K562 (cell line): ENCODE measurements at regions of chr1 and their contacts with region 1.

Region 1: GRCh38 chr1:11262171-11263049 is at the start of gene MTOR:
- DNase-seq: peak; percentile 100
- ATAC-seq: peak; percentile 99
- H3K4me3 ChIP-seq: peak within 1 kb of the TSS; percentile 96
- H3K27ac ChIP-seq: peak within 1 kb of the TSS; percentile 81
- H3K4me1 ChIP-seq: peaks cover 0 to 20% of the 10 kb centered on the region in 2 experiments; a peak in 4 of 5 replicates
- H3K27me3 ChIP-seq: no peaks in the 10 kb centered on the region; a peak in 1 of 5 replicates
- CTCF ChIP-seq: peak; percentile 45 to 59 (median 48)
- EP300 ChIP-seq: peak; percentile 66
- POLR2A ChIP-seq: peak; percentile 89
- RAD21 ChIP-seq: 0 out of 4 replicates have a peak, but pooled peaks of 1 of the 2 experiments have one; percentile 10
- polyA plus RNA-seq, gene MTOR: 11.4 to 16.3 TPM

Region 2: DNA sequence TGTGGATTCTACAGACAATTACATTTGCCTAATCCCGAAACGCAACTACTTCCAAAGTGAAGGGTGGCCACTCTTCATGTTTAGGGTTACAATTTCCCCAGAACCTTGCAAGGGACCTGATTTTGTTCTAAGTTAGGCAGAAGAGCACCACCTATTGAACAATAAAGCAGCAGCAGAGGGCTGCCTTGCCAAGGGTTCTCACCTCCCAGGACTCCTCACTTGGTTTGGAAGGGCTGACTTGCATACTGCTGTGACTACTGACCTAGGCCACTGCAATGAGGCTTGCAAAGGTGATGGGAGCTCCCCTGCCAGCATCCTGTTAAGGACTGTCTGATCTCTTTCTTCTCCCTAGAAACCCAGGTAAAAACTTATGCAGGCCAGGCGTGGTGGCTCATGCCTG is 14.3 kb before region 1 on chr1:
- CTCF ChIA-PET with region 1: no interaction called
- POLR2A ChIA-PET with region 1: interaction called, 23 read pairs
- in situ Hi-C with region 1: no loop called
- intact Hi-C with region 1: no loop called
- DNase-seq: peak in 1 of 4 experiments; percentile 21
- ATAC-seq: peak; percentile 63
- H3K4me3 ChIP-seq: no peak overlapping the region
- H3K27ac ChIP-seq: no peak overlapping the region
- H3K4me1 ChIP-seq: no peaks in the 10 kb centered on the region
- H3K27me3 ChIP-seq: no peaks in the 10 kb centered on the region
- CTCF ChIP-seq: peak in 2 of 3 experiments; percentile 15 to 23; a peak in 1 of 6 replicates
- EP300 ChIP-seq: no peak
- POLR2A ChIP-seq: no peak
- RAD21 ChIP-seq: no peak

Region 3: DNA sequence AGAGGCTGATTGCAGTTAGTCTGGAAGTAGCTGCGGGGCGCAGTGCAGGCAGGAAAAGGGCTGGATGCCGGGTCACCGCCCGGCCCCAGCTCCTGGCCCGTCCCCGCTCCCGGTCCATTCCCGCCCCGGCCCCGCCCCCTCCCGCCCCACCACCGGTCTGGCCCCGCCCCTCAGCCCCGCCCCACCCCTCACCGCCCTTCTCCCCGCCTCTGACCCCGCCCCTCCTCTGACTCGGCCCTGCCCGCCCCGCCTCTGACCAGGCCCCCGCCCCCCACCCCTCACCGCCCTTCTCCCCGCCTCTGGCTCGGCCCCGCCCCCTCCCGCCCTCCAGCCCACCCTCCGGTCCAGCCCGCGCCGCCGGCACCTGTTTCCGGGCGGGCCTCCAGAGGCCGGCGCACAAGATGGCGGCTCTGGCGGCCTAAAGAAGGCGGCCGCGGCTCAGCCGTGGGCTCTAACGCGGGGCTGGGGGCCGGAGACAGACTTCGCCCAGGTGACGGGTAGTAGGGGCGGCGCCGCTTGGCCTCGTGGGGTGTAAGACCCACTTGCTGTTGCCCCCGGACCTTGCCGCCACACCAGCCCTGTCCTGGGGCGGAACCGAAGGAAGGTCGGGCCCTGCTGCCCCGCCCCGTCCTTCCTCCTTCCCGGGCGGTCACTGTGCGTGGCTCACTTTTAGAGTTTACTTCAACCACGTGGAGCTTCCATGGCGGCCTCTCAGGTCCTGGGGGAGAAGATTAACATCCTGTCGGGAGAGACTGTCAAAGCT is 10.6 kb after region 1 on chr1 and contains the start of gene UBIAD1:
- CTCF ChIA-PET with region 1: no interaction called
- POLR2A ChIA-PET with region 1: interaction called, 27 read pairs
- in situ Hi-C with region 1: no loop called
- intact Hi-C with region 1: no loop called
- DNase-seq: peak; percentile 91 to 99 (median 98)
- ATAC-seq: peak; percentile 93
- H3K4me3 ChIP-seq: peak within 1 kb of the TSS; percentile 97
- H3K27ac ChIP-seq: peak within 1 kb of the TSS; percentile 93
- H3K4me1 ChIP-seq: peaks cover 18 to 23% of the 10 kb centered on the region in 2 experiments
- H3K27me3 ChIP-seq: no peaks in the 10 kb centered on the region
- CTCF ChIP-seq: peak in 2 of 3 experiments; percentile 19 to 39; a peak in 3 of 6 replicates
- EP300 ChIP-seq: no peak
- POLR2A ChIP-seq: peak; percentile 97
- RAD21 ChIP-seq: no peak
- polyA plus RNA-seq, gene UBIAD1: 6.2 to 7.2 TPM

Region 4: DNA sequence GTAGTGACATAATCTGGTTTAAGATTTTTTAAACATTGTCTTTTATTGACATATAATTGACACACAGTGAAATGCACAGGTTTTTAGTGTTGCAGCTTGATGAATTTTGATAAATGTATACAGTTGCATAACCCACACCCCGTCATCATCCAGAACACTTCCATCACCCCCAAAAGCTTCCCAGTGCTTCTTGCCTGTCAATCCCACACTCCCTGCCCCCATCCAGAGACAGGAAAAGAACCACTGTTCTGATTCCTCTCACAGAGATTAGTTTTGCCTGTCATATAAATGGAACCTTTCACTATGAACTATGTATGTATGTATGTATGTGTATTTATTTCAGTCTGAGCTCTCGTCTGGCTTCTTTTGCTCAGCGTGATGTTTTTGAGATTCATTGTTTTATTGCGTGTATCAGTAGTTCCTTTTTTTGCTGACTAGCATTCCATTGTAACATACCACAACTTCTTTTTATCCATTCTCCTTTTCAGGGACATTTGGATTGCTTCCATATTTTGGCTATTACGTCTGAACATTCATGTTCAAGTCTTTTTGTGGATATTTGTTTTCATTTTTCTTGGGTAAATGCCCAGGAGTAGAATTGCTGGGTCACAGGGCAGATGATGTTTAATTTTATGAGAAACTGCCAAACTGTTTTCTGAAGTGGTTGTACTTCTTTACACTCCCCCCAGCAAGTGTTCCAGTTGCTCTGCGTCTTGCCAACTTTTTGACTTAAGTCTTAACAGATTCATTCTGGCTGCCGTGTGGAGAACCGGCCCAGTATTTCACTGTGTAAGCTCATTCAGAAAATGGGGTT is 19.3 kb after region 1 on chr1:
- CTCF ChIA-PET with region 1: no interaction called
- POLR2A ChIA-PET with region 1: interaction called, 10 read pairs
- in situ Hi-C with region 1: no loop called
- intact Hi-C with region 1: no loop called
- DNase-seq: no peak
- ATAC-seq: no peak
- H3K4me3 ChIP-seq: no peak overlapping the region
- H3K27ac ChIP-seq: no peak overlapping the region
- H3K4me1 ChIP-seq: peaks cover 9 to 13% of the 10 kb centered on the region in 2 experiments; a peak in 3 of 5 replicates
- H3K27me3 ChIP-seq: no peaks in the 10 kb centered on the region
- CTCF ChIP-seq: no peak
- EP300 ChIP-seq: no peak
- POLR2A ChIP-seq: no peak
- RAD21 ChIP-seq: no peak

Region 5: DNA sequence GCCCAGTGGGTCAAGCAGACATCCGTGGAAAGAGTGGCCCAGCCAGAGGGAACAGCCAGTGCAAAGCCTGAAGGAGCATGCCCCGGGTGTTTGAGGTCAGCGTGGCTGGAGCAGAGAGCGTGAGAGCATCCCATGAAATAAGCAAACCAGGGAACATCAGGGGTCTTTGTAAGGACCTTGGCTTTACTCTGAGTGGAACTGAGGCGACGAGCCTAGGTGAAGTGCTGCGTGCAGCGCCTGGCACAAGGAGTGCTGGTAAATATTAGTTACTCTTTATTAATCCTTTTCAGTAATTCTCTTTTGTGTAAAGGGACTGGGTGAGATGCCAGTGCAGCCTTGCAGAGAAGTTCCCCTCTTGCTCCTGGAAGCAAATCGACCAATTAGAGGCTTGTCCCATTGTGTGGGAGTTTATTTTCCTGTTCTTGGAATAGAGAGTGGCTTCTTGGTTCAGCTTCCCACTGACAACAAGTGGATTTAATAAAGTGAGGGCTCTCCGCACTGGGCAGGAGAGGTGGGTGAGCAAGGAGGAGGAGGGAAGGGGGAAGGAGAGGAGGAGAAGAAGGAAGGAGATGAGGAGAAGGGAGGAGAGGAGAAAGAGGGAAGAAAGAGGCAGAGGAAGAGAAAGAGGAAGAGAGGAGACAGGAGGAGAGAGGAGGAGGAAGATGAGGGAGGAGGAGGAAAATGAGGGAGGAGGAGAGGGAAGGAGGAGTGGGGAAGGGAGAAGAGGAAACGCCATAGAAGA is 179.0 kb after region 1 on chr1:
- CTCF ChIA-PET with region 1: no interaction called
- POLR2A ChIA-PET with region 1: no interaction called
- in situ Hi-C with region 1: no loop called
- intact Hi-C with region 1: no loop called
- DNase-seq: no peak
- ATAC-seq: no peak
- H3K4me3 ChIP-seq: no peak overlapping the region
- H3K27ac ChIP-seq: no peak overlapping the region
- H3K4me1 ChIP-seq: no peaks in the 10 kb centered on the region
- H3K27me3 ChIP-seq: peaks cover 30 to 70% of the 10 kb centered on the region in 2 experiments
- CTCF ChIP-seq: no peak
- EP300 ChIP-seq: no peak
- POLR2A ChIP-seq: no peak
- RAD21 ChIP-seq: no peak